AG04449 (cell line): ENCODE measurements at regions of chr2 and their contacts with region 1.

Region 1: GRCh38 chr2:27016801-27017325 is 15.9 kb upstream of the TMEM214 start:
- DNase-seq: no peak
- H3K4me3 ChIP-seq: no peak overlapping the region
- CTCF ChIP-seq: peak; percentile 60

Region 2: GRCh38 chr2:26942543-26943295 is 74.1 kb before region 1 on chr2:
- CTCF ChIA-PET with region 1: interaction called, 18 read pairs
- POLR2A ChIA-PET with region 1: no interaction called
- DNase-seq: no peak
- H3K4me3 ChIP-seq: no peak overlapping the region
- CTCF ChIP-seq: peak; percentile 77

Region 3: GRCh38 chr2:26982102-26982742 is 34.6 kb before region 1 on chr2:
- CTCF ChIA-PET with region 1: interaction called, 29 read pairs
- POLR2A ChIA-PET with region 1: no interaction called
- DNase-seq: no peak
- H3K4me3 ChIP-seq: no peak overlapping the region
- CTCF ChIP-seq: no peak

Region 4: GRCh38 chr2:26993768-26994167 is 23.1 kb before region 1 on chr2:
- CTCF ChIA-PET with region 1: interaction called, 39 read pairs
- POLR2A ChIA-PET with region 1: no interaction called
- DNase-seq: no peak
- H3K4me3 ChIP-seq: no peak overlapping the region
- CTCF ChIP-seq: no peak

Region 5: DNA sequence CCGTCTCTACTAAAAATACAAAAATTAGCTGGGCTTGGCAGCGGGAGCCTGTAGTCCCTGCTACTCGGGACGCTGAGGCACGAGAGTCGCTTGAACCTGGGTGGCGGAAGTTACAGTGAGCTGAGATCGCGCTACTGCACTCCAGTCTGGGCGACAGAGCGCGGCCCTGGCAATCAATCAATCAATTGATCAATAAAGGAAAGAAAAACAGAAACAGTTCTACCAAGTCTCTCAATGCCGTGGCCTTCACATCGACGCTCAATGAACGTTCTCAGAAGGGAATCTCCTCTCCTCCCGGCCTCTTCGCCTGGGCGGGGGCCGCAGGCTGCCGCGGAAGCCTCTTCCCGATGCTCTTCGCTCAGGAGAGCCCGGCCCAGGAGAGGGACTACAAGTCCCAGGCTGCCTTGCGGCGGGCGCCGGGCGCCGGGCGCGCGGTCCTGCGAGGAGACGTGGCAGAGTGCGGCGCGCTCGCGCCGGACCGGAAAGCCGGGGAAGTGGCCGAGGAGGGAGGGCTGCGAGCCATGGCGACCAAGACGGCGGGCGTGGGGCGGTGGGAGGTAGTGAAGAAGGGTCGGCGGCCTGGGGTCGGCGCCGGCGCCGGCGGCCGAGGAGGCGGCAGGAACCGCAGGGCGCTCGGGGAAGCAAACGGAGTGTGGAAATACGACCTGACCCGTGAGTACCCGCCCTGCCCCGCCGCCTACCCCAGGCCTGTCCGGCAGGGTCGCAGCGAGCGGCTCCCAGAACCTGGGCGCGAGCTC is 15.8 kb after region 1 on chr2 and contains the start of gene TMEM214:
- CTCF ChIA-PET with region 1: interaction called, 37 read pairs
- POLR2A ChIA-PET with region 1: interaction called, 3 read pairs
- DNase-seq: no peak
- H3K4me3 ChIP-seq: peak within 1 kb of the TSS; percentile 99
- CTCF ChIP-seq: no peak

Region 6: GRCh38 chr2:27096748-27097297 is 80.0 kb after region 1 on chr2:
- CTCF ChIA-PET with region 1: no interaction called
- POLR2A ChIA-PET with region 1: no interaction called
- DNase-seq: no peak
- H3K4me3 ChIP-seq: no peak overlapping the region
- CTCF ChIP-seq: no peak

Region 7: DNA sequence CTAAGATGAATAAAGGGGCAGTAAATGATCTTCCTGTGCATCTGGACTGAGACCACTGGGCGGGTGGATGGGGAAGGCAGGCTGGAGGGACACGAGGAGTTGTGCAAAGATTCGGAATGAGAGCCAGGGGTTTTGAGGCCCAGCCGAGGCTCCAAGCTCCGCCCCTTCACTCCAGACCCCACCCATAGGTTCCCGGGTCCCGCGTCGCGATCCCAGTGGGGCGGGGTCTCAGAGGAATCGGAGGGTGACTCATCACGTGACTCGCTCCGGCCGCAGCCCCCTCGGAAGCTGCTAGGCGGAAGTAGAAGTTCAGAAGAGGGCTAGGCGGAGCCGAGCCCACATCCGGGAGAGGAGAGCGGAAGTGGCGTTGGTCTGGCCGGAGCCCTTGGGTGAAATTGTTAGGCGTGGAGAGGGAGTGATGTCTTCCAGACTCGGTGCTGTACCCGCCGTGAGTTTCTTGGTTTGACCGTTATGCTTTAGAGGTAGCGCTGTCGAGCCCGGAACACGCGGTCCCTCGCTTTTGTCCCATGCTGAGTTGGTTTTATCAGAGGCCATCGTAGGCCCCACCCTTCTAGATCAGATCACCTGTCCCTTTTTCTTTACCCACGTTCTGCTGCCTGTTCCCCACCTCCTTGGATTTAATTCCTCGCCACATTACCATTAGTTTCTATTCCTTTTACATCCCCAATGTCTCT is 566.0 kb after region 1 on chr2 and contains the start of gene ZNF512:
- CTCF ChIA-PET with region 1: no interaction called
- POLR2A ChIA-PET with region 1: no interaction called
- DNase-seq: peak; percentile 38
- H3K4me3 ChIP-seq: peak within 1 kb of the TSS; percentile 82
- CTCF ChIP-seq: no peak